Esophagus squamous epithelium (tissue), 5 donors: ENCODE measurements at regions of chr21 and their contacts with region 1.

Region 1: GRCh38 chr21:46100426-46100825 is 2.5 kb downstream of the COL6A2 start:
- DNase-seq: no peak
- H3K4me3 ChIP-seq: peak overlapping the region in 2 of 4 donors; percentile 75 to 84
- H3K27ac ChIP-seq: peak overlapping the region in 1 of 4 donors; percentile 96
- H3K4me1 ChIP-seq: peaks cover 0 to 31% (median 15%) of the 10 kb centered on the region in 3 donors
- H3K27me3 ChIP-seq: peaks cover 0 to 70% (median 5%) of the 10 kb centered on the region in 4 donors
- CTCF ChIP-seq: no peak
- POLR2A ChIP-seq: no peak

Region 2: GRCh38 chr21:45923146-45923545 is 177.3 kb before region 1 on chr21:
- intact Hi-C with region 1: no loop called
- DNase-seq: no peak
- H3K4me3 ChIP-seq: no peak overlapping the region
- H3K27ac ChIP-seq: no peak overlapping the region
- H3K4me1 ChIP-seq: no peaks in the 10 kb centered on the region
- H3K27me3 ChIP-seq: peaks cover 0 to 6% (median 0%) of the 10 kb centered on the region in 4 donors
- CTCF ChIP-seq: peak; percentile 63 to 84 (median 65)
- POLR2A ChIP-seq: no peak

Region 3: GRCh38 chr21:45973659-45974072 is 126.8 kb before region 1 on chr21:
- intact Hi-C with region 1: loop called (anchors 10 kb)
- DNase-seq: no peak
- H3K4me3 ChIP-seq: peak overlapping the region; percentile 33 to 64 (median 50)
- H3K27ac ChIP-seq: peak overlapping the region; percentile 74 to 94 (median 90)
- H3K4me1 ChIP-seq: peaks cover 43 to 71% (median 44%) of the 10 kb centered on the region in 3 donors
- H3K27me3 ChIP-seq: peaks cover 0 to 80% (median 11%) of the 10 kb centered on the region in 4 donors
- CTCF ChIP-seq: peak in 5 of 6 experiments; percentile 3 to 62 (median 58)
- POLR2A ChIP-seq: peak in 2 of 4 donors; percentile 3 to 27